B cell (primary cell): ENCODE measurements at regions of chr18 and their contacts with region 1.

Region 1: GRCh38 chr18:13216092-13216582 is 2.4 kb upstream of the LDLRAD4 start:
- DNase-seq: peak; percentile 69
- ATAC-seq: peak; percentile 39
- H3K4me3 ChIP-seq: no peak overlapping the region
- H3K4me3 Mint-ChIP-seq: peak overlapping the region; percentile 93
- H3K27ac ChIP-seq: no peak overlapping the region
- H3K27ac Mint-ChIP-seq: peak overlapping the region; percentile 27
- H3K4me1 ChIP-seq: peaks cover 20 to 24% of the 10 kb centered on the region in 2 donors
- H3K4me1 Mint-ChIP-seq: peaks cover 19% of the 10 kb centered on the region
- H3K27me3 ChIP-seq: peaks cover 0 to 52% (median 21%) of the 10 kb centered on the region in 4 experiments
- H3K27me3 Mint-ChIP-seq: peaks cover 60% of the 10 kb centered on the region
- CTCF ChIP-seq: peak; percentile 43

Region 2: DNA sequence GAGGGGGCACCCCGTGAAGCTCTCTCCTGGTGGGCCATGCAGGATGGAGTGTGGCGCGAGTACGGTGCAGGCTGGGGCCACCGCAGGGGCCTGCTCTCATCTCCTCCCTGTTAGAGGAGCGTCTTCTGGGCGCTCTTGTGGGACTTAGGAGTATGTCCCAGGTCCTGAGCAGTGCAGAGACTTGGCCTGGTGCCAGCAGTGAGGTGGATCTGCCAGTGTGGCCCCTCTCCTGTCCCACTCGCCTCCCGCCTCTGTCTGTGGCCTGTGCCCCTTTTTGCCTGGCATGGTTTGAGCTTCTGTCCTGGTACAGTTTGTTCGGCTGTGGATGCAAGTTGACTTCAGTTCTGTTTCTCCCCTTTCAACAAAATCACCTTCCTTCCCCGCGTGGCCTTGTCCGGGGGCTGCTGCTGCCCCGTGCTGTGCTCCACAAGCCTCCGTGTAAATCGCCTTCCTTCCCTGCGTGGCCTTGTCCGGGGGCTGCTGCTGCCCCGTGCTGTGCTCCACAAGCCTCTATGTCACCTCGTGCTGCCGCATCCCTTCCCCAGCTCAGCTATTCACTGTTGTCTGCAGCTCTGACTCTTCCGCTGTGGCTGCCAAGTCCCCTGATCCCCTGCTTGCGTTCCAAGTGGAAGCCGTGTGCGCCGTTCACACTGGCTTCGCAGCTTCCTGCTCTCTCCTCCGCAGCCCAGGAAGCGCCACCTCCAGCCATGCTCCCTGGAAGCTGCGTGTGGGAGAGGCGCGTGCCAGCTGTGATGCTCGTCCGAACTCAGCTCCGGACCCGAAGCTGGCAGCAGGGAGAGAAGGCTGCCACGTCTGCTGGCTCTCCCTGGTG is 16.2 kb after region 1 on chr18:
- CTCF ChIA-PET with region 1: no interaction called
- POLR2A ChIA-PET with region 1: no interaction called
- intact Hi-C with region 1: no loop called
- DNase-seq: no peak
- ATAC-seq: no peak
- H3K4me3 ChIP-seq: no peak overlapping the region
- H3K4me3 Mint-ChIP-seq: no peak overlapping the region
- H3K27ac ChIP-seq: no peak overlapping the region
- H3K27ac Mint-ChIP-seq: no peak overlapping the region
- H3K4me1 ChIP-seq: no peaks in the 10 kb centered on the region
- H3K4me1 Mint-ChIP-seq: no peaks in the 10 kb centered on the region
- H3K27me3 ChIP-seq: no peaks in the 10 kb centered on the region
- H3K27me3 Mint-ChIP-seq: no peaks in the 10 kb centered on the region
- CTCF ChIP-seq: no peak

Region 3: GRCh38 chr18:13530879-13531387 is 314.8 kb after region 1 on chr18:
- CTCF ChIA-PET with region 1: interaction called, 11 read pairs
- POLR2A ChIA-PET with region 1: no interaction called
- intact Hi-C with region 1: loop called (anchors 1 kb)
- DNase-seq: peak; percentile 43
- ATAC-seq: peak; percentile 51
- H3K4me3 ChIP-seq: no peak overlapping the region
- H3K4me3 Mint-ChIP-seq: no peak overlapping the region
- H3K27ac ChIP-seq: no peak overlapping the region
- H3K27ac Mint-ChIP-seq: no peak overlapping the region
- H3K4me1 ChIP-seq: peaks cover 0 to 8% of the 10 kb centered on the region in 2 donors
- H3K4me1 Mint-ChIP-seq: peaks cover 8% of the 10 kb centered on the region
- H3K27me3 ChIP-seq: no peaks in the 10 kb centered on the region
- H3K27me3 Mint-ChIP-seq: no peaks in the 10 kb centered on the region
- CTCF ChIP-seq: no peak

Region 4: DNA sequence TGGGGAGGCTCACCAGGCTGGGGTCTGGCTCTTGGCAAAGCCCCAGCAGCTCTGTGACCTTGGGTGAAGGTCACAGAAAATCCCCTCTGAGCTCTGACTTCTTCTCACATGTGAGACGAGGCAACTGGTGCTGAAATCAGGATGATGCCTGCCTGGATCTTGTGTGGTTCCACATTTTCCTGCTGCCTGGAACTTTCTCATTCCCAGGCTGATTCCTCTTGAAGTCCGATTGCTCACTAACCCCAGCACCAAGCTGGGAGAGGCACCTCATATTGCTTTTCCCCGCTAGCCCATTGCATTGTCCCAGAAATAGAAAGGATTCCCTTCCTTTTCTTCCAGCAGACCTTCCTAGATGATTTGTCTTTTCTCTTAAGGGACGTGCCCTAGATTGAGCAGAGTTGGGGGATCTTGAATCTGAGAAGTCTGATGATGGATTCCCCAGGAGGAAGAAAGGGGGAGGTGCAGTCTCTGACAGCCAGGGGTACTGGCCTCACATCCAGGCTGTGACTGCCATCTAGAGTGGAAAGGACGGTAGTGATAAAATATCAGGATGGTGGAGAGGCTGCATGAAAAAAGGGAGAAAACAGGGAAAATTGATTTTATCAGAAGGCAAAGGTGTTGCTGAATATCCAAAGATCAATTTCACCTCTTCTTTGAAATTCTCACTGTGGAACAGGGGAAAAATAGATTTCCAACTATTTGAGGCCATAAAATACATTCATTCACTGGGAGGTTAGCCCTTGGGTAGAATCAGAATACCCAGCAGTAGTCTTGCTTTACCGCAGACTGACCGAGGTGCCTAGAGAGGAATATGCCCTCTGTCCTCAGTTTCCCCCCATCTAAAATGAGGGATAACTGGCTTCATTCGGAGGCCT is 413.9 kb after region 1 on chr18:
- CTCF ChIA-PET with region 1: interaction called, 21 read pairs
- POLR2A ChIA-PET with region 1: no interaction called
- intact Hi-C with region 1: loop called (anchors 1 kb)
- DNase-seq: peak; percentile 82
- ATAC-seq: peak; percentile 95
- H3K4me3 ChIP-seq: no peak overlapping the region
- H3K4me3 Mint-ChIP-seq: peak overlapping the region; percentile 55
- H3K27ac ChIP-seq: no peak overlapping the region
- H3K27ac Mint-ChIP-seq: peak overlapping the region; percentile 42
- H3K4me1 ChIP-seq: peaks cover 5 to 6% of the 10 kb centered on the region in 2 donors
- H3K4me1 Mint-ChIP-seq: peaks cover 18% of the 10 kb centered on the region
- H3K27me3 ChIP-seq: no peaks in the 10 kb centered on the region
- H3K27me3 Mint-ChIP-seq: no peaks in the 10 kb centered on the region
- CTCF ChIP-seq: peak; percentile 95

Region 5: GRCh38 chr18:13878858-13879257 is 662.7 kb after region 1 on chr18:
- CTCF ChIA-PET with region 1: no interaction called
- POLR2A ChIA-PET with region 1: no interaction called
- intact Hi-C with region 1: no loop called
- DNase-seq: no peak
- ATAC-seq: no peak
- H3K4me3 ChIP-seq: no peak overlapping the region
- H3K4me3 Mint-ChIP-seq: no peak overlapping the region
- H3K27ac ChIP-seq: no peak overlapping the region
- H3K27ac Mint-ChIP-seq: no peak overlapping the region
- H3K4me1 ChIP-seq: no peaks in the 10 kb centered on the region
- H3K4me1 Mint-ChIP-seq: no peaks in the 10 kb centered on the region
- H3K27me3 ChIP-seq: peaks cover 0 to 4% (median 0%) of the 10 kb centered on the region in 4 experiments
- H3K27me3 Mint-ChIP-seq: peaks cover 1% of the 10 kb centered on the region
- CTCF ChIP-seq: no peak